Natural killer cell (primary cell): ENCODE measurements at regions of chr22 and their contacts with region 1.

Region 1: GRCh38 chr22:32985899-32986765 is 72.0 kb downstream of the SYN3 start:
- DNase-seq: peak in 1 of 2 donors; percentile 60
- ATAC-seq: peak; percentile 38 to 82 (median 69)
- H3K4me3 ChIP-seq: no peak overlapping the region
- H3K4me3 Mint-ChIP-seq: no peak overlapping the region
- H3K27ac ChIP-seq: no peak overlapping the region
- H3K27ac Mint-ChIP-seq: no peak overlapping the region
- H3K4me1 ChIP-seq: no peaks in the 10 kb centered on the region
- H3K4me1 Mint-ChIP-seq: peaks cover 0 to 5% of the 10 kb centered on the region in 2 donors
- H3K27me3 ChIP-seq: no peaks in the 10 kb centered on the region
- H3K27me3 Mint-ChIP-seq: no peaks in the 10 kb centered on the region
- CTCF ChIP-seq: peak; percentile 56

Region 2: DNA sequence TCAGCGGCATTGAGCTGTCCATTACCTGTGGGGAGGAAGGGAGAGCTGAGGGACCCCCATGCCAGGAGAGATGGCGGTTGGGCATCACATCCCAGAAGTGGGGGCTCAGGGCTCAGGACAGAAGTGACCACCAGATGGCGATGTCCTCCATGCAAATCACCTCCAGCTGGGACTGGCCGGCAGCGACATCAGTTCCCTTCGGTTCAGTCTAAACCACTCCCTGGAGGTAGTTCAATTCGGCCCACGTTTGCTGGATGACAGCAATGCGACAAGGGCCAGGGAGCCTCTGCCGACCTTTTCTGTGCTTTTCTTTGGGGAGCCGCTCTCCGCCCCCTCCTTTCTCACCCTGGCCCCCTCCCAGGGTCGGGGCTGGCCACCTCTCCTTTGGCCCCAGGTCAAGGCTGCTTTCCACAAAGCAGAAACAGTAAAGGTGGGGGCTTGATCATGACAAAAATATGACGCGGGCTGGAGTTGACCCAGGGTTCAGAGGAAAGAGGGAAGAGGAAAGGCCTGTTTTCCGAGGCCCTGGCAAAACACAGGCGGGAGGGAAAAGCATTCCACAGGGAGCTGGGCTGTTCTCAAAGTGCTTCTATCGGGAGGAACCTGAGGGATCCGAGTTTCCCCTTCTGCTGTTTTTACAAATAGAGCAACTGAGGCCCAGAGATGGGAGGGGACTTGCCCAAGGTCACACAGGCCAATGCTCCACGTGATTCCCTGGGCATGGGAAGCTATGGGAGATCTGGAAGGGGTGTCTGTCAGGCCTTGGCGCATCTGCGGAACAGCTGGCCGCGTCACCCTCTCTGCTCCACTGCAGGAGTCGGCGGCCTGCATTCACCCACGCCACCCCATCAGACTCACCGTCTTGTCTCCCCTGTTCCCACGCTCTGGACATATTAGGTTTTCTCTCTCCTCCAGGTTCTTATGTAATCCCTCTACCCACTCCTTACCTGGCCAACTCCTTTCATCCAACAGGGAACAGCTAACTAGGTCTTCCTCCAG is 456.8 kb before region 1 on chr22:
- intact Hi-C with region 1: loop called (anchors 5 kb)
- DNase-seq: peak; percentile 35 to 80
- ATAC-seq: peak; percentile 49 to 81 (median 57)
- H3K4me3 ChIP-seq: no peak overlapping the region
- H3K4me3 Mint-ChIP-seq: no peak overlapping the region
- H3K27ac ChIP-seq: no peak overlapping the region
- H3K27ac Mint-ChIP-seq: no peak overlapping the region
- H3K4me1 ChIP-seq: no peaks in the 10 kb centered on the region
- H3K4me1 Mint-ChIP-seq: no peaks in the 10 kb centered on the region
- H3K27me3 ChIP-seq: no peaks in the 10 kb centered on the region
- H3K27me3 Mint-ChIP-seq: peaks cover 0 to 7% of the 10 kb centered on the region in 2 donors
- CTCF ChIP-seq: peak; percentile 63

Region 3: GRCh38 chr22:32660292-32660691 is 325.8 kb before region 1 on chr22:
- intact Hi-C with region 1: loop called (anchors 10 kb)
- DNase-seq: peak; percentile 42 to 73
- ATAC-seq: peak in 2 of 3 donors; percentile 58 to 65
- H3K4me3 ChIP-seq: no peak overlapping the region
- H3K4me3 Mint-ChIP-seq: no peak overlapping the region
- H3K27ac ChIP-seq: no peak overlapping the region
- H3K27ac Mint-ChIP-seq: no peak overlapping the region
- H3K4me1 ChIP-seq: no peaks in the 10 kb centered on the region
- H3K4me1 Mint-ChIP-seq: no peaks in the 10 kb centered on the region
- H3K27me3 ChIP-seq: no peaks in the 10 kb centered on the region
- H3K27me3 Mint-ChIP-seq: peaks cover 16 to 25% of the 10 kb centered on the region in 2 donors
- CTCF ChIP-seq: peak; percentile 68